ENCODE measurements at regions of chr11 and their contacts with region 1.

Region 1: DNA sequence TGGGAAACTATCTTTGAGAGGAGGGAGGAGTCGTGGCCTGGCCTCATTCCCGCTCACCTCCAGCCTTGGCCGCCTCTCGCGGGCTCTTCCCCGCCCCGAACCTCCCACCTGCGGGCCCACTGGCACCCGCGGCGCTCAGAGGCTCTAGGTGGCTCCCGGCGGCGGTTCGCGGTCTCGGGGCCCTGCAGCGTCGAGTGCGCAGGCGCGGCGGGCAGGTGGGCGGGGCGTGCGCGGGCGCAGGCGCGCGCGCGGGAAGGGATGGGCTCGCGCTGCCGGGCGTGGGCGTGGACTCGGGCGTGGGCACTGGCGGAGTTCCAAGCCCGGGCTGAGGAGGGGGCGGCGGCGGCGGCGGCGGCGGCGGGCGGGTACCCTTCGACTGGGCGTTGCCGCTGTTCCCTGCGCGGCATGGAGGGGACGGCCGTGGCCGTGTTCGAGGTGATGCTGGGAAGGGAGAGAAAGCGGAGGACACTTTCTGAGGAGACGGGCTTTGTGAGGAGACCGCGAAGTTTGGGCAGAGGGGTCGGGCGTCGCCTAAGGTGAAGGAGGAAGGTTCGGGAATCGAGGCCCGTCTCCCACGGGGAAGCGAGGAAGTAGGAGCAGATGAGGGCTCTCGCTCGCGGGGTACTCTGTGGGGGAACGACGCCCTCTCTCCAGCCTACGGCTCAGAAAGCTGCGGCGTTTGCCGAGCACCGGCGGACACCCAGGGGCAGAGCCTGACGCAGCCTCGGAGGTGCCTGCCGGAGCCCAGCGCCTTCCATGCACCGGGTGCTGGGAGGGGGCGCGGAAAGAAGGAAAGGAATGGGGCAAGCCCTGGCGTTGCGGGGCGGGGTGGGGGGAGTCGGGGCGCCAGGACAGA is 15.7 kb upstream of the SPTBN2 start:
- DNase-seq: peak; percentile 94
- ATAC-seq: peak; percentile 58
- H3K4me3 ChIP-seq: peak overlapping the region; percentile 77
- H3K27ac ChIP-seq: peak overlapping the region; percentile 86
- H3K4me1 ChIP-seq: peaks cover 50% of the 10 kb centered on the region
- H3K27me3 ChIP-seq: no peaks in the 10 kb centered on the region
- CTCF ChIP-seq: no peak

Region 2: DNA sequence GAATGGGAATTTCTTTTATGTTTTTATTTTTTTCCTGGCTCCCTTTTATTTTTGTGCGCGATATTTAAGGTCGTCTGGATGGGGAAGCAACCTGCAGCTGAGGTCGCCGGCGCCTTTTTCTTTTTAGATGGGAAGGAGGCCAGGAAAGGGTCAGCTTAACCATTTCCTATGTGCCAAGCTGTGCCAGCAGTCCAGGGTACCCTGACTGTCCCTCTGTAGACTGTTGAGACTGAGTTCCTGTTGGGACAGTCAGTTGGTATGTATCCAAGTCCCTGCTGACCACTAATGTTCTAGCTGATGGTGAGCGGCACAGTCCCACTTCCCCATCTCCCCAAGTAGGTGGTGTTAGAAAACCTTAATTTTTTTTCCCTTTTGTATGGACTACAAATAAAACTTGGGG is 117.8 kb before region 1 on chr11:
- CTCF ChIA-PET with region 1: no interaction called
- POLR2A ChIA-PET with region 1: interaction called, 11 read pairs
- intact Hi-C with region 1: no loop called
- DNase-seq: no peak
- ATAC-seq: no peak
- H3K4me3 ChIP-seq: no peak overlapping the region
- H3K27ac ChIP-seq: no peak overlapping the region
- H3K4me1 ChIP-seq: no peaks in the 10 kb centered on the region
- H3K27me3 ChIP-seq: no peaks in the 10 kb centered on the region
- CTCF ChIP-seq: no peak

Region 3: GRCh38 chr11:66727282-66727882 is 17.3 kb before region 1 on chr11:
- CTCF ChIA-PET with region 1: no interaction called
- POLR2A ChIA-PET with region 1: interaction called, 3 read pairs
- intact Hi-C with region 1: loop called (anchors 1 kb)
- DNase-seq: peak; percentile 50
- ATAC-seq: peak; percentile 33
- H3K4me3 ChIP-seq: peak overlapping the region; percentile 77
- H3K27ac ChIP-seq: peak overlapping the region; percentile 27
- H3K4me1 ChIP-seq: peaks cover 44% of the 10 kb centered on the region
- H3K27me3 ChIP-seq: no peaks in the 10 kb centered on the region
- CTCF ChIP-seq: no peak

Region 4: DNA sequence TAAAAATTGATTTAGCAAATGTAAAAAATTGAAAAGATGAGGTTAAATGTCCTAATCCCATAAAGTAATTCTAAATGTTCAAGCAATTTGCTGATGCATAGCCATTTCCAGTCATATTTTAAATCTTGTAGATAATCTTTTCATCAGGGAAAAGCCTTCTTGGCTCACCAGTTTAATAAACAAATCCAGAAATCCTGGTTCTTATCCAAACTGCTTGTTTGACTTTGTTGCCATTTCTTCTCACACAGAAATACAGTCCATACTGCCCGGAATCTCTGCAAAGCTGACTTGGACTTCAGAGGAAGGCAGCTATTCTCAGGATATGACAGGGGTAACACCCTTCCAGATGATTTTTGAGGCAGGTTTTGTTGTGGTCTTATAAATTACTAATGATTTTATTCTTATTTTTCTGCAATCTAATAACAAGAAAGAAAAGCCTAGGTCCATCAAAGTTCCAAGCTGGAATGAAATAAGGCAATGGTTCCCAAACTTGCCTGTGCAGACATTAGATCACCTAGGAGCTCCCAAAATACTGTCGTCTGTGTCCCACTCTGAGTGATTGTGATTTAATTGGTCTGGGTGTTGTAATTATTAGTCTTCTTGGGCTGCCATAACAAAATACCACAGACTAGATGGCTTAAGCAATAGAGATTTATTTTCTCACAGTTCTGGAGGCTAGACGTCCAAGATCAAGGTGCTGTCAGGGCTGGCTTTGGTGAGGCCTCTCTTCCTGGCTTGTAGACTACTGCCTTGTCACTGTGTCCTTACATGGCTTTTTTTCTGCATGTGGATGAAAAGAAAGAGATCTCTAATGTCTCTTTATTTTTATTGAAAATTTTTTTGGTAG is 43.4 kb after region 1 on chr11:
- CTCF ChIA-PET with region 1: no interaction called
- POLR2A ChIA-PET with region 1: no interaction called
- intact Hi-C with region 1: loop called (anchors 1 kb)
- DNase-seq: peak; percentile 14
- ATAC-seq: no peak
- H3K4me3 ChIP-seq: no peak overlapping the region
- H3K27ac ChIP-seq: peak overlapping the region; percentile 74
- H3K4me1 ChIP-seq: peaks cover 38% of the 10 kb centered on the region
- H3K27me3 ChIP-seq: no peaks in the 10 kb centered on the region
- CTCF ChIP-seq: no peak

Region 5: DNA sequence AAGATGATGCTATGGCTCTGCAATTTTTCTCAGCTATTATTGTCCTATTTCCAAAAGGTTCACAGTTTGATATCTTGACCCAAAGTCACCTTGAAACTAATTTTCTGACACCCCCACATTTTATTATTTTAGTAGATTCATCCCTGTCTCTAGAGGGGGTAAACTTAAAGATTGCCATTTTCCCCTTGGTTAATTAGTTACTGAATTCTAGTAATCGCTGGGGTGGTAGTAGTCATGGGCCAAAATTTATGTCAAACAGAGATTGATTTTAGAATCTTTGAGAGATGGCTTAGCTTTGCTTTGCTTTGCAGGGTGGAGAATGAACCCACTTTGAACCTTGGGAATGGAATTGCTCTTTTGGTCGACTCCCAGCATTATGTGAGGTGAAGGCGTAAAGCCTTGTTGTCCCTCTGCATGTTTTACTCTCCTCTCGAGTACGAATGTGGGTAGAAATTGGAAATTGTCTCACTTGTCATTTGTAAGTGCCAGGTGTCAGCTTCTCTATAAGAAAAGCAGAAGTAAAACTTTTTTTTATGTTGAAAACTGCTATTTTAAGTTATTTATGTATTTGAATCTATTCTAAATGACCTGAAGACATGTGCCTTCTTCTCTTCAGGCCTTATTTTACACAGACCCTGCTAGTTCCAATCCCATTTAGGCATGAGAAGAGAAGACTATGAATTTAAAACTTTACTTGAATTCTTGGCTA is 56.2 kb after region 1 on chr11:
- CTCF ChIA-PET with region 1: no interaction called
- POLR2A ChIA-PET with region 1: no interaction called
- intact Hi-C with region 1: no loop called
- DNase-seq: no peak
- ATAC-seq: no peak
- H3K4me3 ChIP-seq: no peak overlapping the region
- H3K27ac ChIP-seq: no peak overlapping the region
- H3K4me1 ChIP-seq: no peaks in the 10 kb centered on the region
- H3K27me3 ChIP-seq: no peaks in the 10 kb centered on the region
- CTCF ChIP-seq: no peak

Region 6: DNA sequence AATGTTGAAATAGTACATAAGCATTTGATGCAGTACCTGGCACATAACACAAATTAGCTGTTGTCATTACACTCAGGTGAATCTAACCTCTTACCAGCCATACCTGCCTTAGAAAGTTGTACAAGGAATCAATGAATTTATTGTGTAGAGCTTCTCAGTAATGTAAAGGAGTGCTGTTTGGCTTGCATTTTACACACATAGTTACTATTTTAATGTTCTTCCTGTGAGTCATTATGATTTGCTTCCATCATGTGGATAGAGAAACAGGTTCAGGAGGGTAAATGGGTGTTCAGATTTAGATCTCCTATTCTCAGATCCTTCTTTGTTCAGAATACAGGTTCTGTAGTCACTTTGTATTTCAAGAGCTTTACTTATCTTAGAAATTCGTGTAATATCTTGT is 70.9 kb after region 1 on chr11:
- CTCF ChIA-PET with region 1: no interaction called
- POLR2A ChIA-PET with region 1: no interaction called
- intact Hi-C with region 1: loop called (anchors 5 kb)
- DNase-seq: peak; percentile 93
- ATAC-seq: peak; percentile 91
- H3K4me3 ChIP-seq: peak overlapping the region; percentile 40; the same call in 1 of the 2 replicates
- H3K27ac ChIP-seq: peak overlapping the region; percentile 87
- H3K4me1 ChIP-seq: peaks cover 35% of the 10 kb centered on the region
- H3K27me3 ChIP-seq: no peaks in the 10 kb centered on the region
- CTCF ChIP-seq: no peak

Region 7: DNA sequence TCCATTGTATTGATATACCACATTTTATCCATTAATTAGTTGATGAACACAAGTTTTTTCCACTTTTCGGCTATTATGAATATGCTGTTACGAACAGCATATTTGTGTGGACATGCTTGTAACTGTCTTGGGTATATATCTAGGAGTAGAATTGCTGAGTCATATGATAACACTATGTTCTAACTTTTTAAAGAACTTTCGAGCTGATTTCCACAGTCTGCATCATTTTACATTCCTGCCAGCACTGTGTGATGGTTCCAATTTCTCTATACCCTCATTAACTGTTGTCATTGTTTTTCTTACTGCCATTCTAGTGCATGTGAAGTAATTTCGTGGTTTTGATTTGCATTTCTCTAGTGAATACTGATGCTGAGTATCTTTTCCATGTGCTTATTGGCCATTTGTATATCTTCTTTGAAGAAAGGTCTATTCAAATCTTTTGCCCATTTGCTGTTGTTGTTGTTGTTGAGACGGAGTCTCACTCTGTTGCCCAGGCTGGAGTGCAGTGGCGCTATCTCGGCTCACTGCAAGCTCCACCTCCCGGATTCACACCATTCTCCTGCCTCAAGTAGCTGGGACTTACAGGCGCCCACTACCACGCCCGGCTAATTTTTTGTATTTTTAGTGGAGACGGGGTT is 91.2 kb after region 1 on chr11:
- CTCF ChIA-PET with region 1: no interaction called
- POLR2A ChIA-PET with region 1: no interaction called
- intact Hi-C with region 1: loop called (anchors 2 kb)
- DNase-seq: no peak
- ATAC-seq: no peak
- H3K4me3 ChIP-seq: no peak overlapping the region
- H3K27ac ChIP-seq: no peak overlapping the region
- H3K4me1 ChIP-seq: peaks cover 10% of the 10 kb centered on the region
- H3K27me3 ChIP-seq: no peaks in the 10 kb centered on the region
- CTCF ChIP-seq: no peak

Region 8: GRCh38 chr11:67983951-67984350 is 1239.2 kb after region 1 on chr11:
- CTCF ChIA-PET with region 1: no interaction called
- POLR2A ChIA-PET with region 1: no interaction called
- intact Hi-C with region 1: no loop called
- DNase-seq: no peak
- ATAC-seq: no peak
- H3K4me3 ChIP-seq: no peak overlapping the region
- H3K27ac ChIP-seq: no peak overlapping the region
- H3K4me1 ChIP-seq: peaks cover 7% of the 10 kb centered on the region
- H3K27me3 ChIP-seq: no peaks in the 10 kb centered on the region
- CTCF ChIP-seq: no peak